RWPE1 (cell line): ENCODE measurements at regions of chr5 and their contacts with region 1.

Region 1: GRCh38 chr5:31854181-31855133 is 215.5 kb downstream of the PDZD2 start:
- DNase-seq: peak; percentile 82
- H3K27ac ChIP-seq: peak overlapping the region; percentile 95
- CTCF ChIP-seq: no peak

Region 2: DNA sequence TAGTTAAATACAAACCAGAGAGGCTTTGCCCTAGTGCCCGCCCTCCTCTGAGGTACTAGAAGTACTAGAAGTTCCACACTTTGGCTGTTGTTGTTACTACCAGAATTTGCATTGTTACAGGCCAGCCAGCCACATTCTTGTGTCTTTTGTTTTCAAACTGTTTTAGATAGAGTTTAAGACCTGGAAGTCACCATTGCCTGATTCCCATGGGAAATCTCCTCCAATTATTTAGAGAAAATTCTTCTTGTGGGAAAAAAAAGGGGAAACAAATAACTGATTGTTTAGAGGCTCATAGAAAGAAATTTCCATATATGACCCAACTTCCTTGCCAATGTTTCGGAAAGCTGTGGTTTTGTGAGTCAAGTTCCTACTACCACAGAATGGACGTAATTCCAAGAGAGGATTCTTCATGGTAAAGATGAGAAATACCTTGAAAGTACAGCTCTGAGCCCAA is 67.4 kb after region 1 on chr5:
- CTCF ChIA-PET with region 1: interaction called, 12 read pairs
- POLR2A ChIA-PET with region 1: no interaction called
- DNase-seq: peak; percentile 83
- H3K27ac ChIP-seq: peak overlapping the region; percentile 61
- CTCF ChIP-seq: no peak

Region 3: DNA sequence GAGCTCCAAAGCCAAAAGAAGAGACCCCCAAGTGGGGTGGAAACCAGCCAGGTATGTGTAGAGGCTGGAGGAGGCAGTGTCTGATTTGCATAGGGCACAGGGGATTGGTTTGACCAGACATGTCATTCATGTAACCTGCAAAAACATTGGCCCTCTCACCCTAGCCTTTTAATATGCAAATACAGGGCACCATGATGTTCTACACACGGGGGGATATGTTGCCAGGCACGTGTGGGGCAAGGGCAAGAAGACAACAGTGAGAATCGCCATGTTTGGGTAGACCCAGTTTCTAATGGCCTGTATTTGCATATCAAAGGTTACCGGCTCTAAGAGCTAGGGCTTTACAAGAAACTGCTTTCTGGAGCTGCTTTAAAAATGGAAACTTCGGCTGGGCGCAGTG is 110.8 kb after region 1 on chr5:
- CTCF ChIA-PET with region 1: no interaction called
- POLR2A ChIA-PET with region 1: no interaction called
- DNase-seq: no peak
- H3K27ac ChIP-seq: no peak overlapping the region
- CTCF ChIP-seq: no peak